ENCODE measurements at regions of chr20 and their contacts with region 1.

Region 1: DNA sequence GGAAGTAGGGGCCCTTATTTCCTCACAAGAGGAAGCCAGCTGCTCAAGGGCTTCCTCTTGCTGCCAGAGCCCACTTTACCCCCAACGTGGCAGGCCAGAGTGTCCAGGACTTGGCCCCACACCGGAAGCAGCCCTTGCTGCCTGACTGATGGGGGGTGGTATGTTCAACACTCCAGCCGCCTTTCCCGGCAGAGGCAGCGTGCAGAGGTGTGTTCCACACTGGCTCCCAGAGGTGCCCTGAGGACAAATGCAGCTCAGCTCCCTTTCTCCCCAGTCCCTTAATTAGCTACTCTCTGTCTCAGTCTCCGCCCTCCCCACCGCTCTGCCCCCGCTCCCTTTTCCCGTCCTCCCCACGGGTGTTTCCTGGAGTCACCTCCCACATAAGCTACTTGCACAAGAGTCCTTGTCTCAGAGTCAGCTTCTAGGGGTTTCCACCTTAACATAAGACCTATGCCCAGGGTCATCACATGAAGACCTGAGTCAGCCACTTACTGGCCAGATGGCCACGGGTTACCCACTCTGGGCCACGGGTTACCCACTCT is 61.7 kb upstream of the SHLD1 start:
- DNase-seq: peak; percentile 57 to 95 (median 84)
- H3K4me3 ChIP-seq: peak overlapping the region in 1 of 3 experiments; percentile 24
- H3K4me3 Mint-ChIP-seq: peak overlapping the region; percentile 53 to 68
- H3K27ac ChIP-seq: peak overlapping the region; percentile 73 to 74
- H3K27ac Mint-ChIP-seq: peak overlapping the region; percentile 76 to 94 (median 89)
- H3K4me1 ChIP-seq: peaks cover 47% of the 10 kb centered on the region in 2 donors
- H3K4me1 Mint-ChIP-seq: peaks cover 46% of the 10 kb centered on the region
- H3K27me3 ChIP-seq: no peaks in the 10 kb centered on the region
- H3K27me3 Mint-ChIP-seq: peaks cover 0 to 6% (median 0%) of the 10 kb centered on the region in 3 donors
- CTCF ChIP-seq: no peak

Region 2: DNA sequence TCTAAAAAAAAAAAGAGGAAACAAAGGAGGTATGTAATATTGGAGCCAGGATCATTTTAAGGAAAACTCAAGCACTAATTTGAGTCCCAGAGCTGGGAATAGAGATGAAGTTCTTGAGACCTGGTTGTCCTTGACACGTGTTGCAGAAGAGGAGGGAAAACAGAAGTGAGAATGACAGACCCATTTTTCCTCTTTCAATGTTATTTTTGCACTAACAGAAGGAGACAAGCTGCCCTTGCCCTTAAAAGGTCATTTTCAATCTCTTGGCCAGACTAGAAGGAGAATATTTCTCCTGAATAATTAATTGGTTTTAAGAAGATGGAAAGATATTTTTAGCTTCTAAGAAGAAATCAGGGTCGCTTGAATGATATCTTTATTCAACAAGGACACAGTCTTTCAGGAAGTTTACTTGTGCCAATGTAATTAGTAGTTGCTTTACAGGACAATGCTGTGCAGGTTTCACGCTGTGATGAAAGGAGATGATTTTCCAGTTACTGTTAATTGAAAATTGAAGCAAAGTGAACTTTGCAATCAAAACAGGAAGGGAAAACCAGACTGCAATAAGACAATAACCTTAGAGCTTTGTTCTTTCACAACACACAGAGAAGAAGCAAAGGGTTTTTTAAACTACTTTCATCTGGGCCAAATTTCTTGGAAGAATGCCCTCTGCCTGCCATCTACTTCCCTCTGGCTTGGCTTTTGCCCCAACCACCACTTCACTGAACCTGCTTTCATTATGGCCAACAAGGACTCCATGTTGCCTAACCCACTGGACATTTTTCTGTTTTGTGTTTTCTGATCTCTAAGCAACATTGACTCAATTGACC is 46.1 kb before region 1 on chr20:
- intact Hi-C with region 1: loop called in 1 of 2 experiments (anchors 5 kb)
- DNase-seq: peak; percentile 82 to 95 (median 86)
- H3K4me3 ChIP-seq: peak overlapping the region in 1 of 3 experiments; percentile 11
- H3K4me3 Mint-ChIP-seq: peak overlapping the region in 1 of 2 donors; percentile 49
- H3K27ac ChIP-seq: peak overlapping the region; percentile 90 to 98
- H3K27ac Mint-ChIP-seq: peak overlapping the region; percentile 96 to 100 (median 99)
- H3K4me1 ChIP-seq: peaks cover 64 to 65% of the 10 kb centered on the region in 2 donors
- H3K4me1 Mint-ChIP-seq: peaks cover 62% of the 10 kb centered on the region
- H3K27me3 ChIP-seq: no peaks in the 10 kb centered on the region
- H3K27me3 Mint-ChIP-seq: peaks cover 0 to 5% (median 1%) of the 10 kb centered on the region in 3 donors
- CTCF ChIP-seq: no peak

Measured in CD14-positive monocyte (primary cell).